Activated CD8-positive, alpha-beta T cell treated with anti-CD3 and anti-CD28 coated beads for 36 hours (primary cell): ENCODE measurements at regions of chr6 and their contacts with region 1.

Region 1: DNA sequence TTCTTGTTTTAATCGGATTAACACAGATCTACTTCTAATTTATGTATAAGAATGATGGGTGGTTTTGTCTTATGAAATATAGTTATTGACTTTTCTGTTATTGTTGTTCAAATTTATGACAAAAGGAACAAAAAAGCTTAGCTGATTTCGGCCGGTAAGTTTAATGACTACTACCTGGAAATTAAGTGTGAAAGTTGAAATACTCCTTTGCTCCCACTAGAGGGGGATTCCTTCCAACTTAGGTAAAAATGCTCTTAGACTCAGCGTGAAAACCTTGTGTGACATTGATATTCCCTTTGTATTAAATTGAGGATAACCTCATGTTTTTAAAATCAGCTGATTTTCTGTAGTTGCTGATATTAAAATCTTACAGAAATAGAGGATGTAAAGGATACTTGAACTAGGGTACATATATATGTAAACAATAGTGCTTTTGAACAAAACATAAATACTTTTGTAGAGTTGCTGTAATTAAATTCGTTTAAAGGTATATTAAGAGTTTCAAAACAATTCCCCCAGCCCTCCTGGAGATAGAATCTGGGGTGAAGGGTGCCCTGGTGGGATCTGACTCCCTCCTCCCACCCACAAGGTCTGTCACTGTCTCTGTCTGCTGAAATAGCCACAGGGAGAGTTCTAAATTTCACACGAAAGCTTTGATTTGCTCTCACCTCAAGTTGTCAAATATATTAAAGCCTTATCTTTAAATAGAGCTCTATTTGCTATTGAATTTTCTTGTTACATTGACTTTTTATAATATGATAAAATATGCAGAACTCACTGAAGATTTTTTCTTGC is 257.5 kb downstream of the ARID1B start:
- DNase-seq: no peak
- ATAC-seq: peak; percentile 82
- H3K4me3 Mint-ChIP-seq: peak overlapping the region; percentile 55
- H3K27ac Mint-ChIP-seq: peak overlapping the region; percentile 64
- H3K4me1 Mint-ChIP-seq: peaks cover 23% of the 10 kb centered on the region
- H3K27me3 Mint-ChIP-seq: no peaks in the 10 kb centered on the region
- CTCF ChIP-seq: peak; percentile 75

Region 2: GRCh38 chr6:156564127-156564806 is 470.4 kb before region 1 on chr6:
- CTCF ChIA-PET with region 1: no interaction called
- POLR2A ChIA-PET with region 1: no interaction called
- intact Hi-C with region 1: no loop called
- DNase-seq: peak; percentile 82
- ATAC-seq: peak; percentile 99
- H3K4me3 Mint-ChIP-seq: no peak overlapping the region
- H3K27ac Mint-ChIP-seq: no peak overlapping the region
- H3K4me1 Mint-ChIP-seq: no peaks in the 10 kb centered on the region
- H3K27me3 Mint-ChIP-seq: peaks cover 9% of the 10 kb centered on the region
- CTCF ChIP-seq: peak; percentile 81

Region 3: GRCh38 chr6:157045831-157046454 is 11.3 kb after region 1 on chr6:
- CTCF ChIA-PET with region 1: interaction called, 16 read pairs
- POLR2A ChIA-PET with region 1: interaction called, 3 read pairs
- intact Hi-C with region 1: no loop called
- DNase-seq: no peak
- ATAC-seq: no peak
- H3K4me3 Mint-ChIP-seq: no peak overlapping the region
- H3K27ac Mint-ChIP-seq: no peak overlapping the region
- H3K4me1 Mint-ChIP-seq: peaks cover 14% of the 10 kb centered on the region
- H3K27me3 Mint-ChIP-seq: no peaks in the 10 kb centered on the region
- CTCF ChIP-seq: peak; percentile 69

Region 4: GRCh38 chr6:157059781-157060180 is 25.1 kb after region 1 on chr6:
- CTCF ChIA-PET with region 1: interaction called, 12 read pairs
- POLR2A ChIA-PET with region 1: no interaction called
- intact Hi-C with region 1: no loop called
- DNase-seq: no peak
- ATAC-seq: no peak
- H3K4me3 Mint-ChIP-seq: no peak overlapping the region
- H3K27ac Mint-ChIP-seq: no peak overlapping the region
- H3K4me1 Mint-ChIP-seq: peaks cover 59% of the 10 kb centered on the region
- H3K27me3 Mint-ChIP-seq: no peaks in the 10 kb centered on the region
- CTCF ChIP-seq: no peak

Region 5: DNA sequence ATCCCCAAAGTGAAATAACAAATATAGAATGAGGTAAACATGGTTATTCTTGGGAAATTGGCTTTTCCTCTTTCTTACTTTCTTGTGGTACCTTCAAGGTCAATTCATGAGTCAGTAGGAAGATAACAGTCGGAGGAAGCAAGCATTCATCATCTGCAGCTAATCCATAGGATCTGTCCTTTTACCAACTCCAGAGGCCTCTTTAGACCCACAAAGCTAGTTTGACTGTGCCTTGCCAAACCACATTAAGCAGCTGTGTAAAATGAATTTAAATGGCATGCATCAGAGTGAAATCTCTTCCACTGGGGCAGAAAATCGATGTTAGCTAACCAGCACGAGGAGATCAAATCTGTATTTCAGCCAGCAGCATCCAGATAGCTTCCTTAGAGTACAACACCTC is 117.4 kb after region 1 on chr6:
- CTCF ChIA-PET with region 1: interaction called, 12 read pairs
- POLR2A ChIA-PET with region 1: no interaction called
- intact Hi-C with region 1: no loop called
- DNase-seq: no peak
- ATAC-seq: no peak
- H3K4me3 Mint-ChIP-seq: no peak overlapping the region
- H3K27ac Mint-ChIP-seq: no peak overlapping the region
- H3K4me1 Mint-ChIP-seq: peaks cover 17% of the 10 kb centered on the region
- H3K27me3 Mint-ChIP-seq: no peaks in the 10 kb centered on the region
- CTCF ChIP-seq: no peak

Region 6: DNA sequence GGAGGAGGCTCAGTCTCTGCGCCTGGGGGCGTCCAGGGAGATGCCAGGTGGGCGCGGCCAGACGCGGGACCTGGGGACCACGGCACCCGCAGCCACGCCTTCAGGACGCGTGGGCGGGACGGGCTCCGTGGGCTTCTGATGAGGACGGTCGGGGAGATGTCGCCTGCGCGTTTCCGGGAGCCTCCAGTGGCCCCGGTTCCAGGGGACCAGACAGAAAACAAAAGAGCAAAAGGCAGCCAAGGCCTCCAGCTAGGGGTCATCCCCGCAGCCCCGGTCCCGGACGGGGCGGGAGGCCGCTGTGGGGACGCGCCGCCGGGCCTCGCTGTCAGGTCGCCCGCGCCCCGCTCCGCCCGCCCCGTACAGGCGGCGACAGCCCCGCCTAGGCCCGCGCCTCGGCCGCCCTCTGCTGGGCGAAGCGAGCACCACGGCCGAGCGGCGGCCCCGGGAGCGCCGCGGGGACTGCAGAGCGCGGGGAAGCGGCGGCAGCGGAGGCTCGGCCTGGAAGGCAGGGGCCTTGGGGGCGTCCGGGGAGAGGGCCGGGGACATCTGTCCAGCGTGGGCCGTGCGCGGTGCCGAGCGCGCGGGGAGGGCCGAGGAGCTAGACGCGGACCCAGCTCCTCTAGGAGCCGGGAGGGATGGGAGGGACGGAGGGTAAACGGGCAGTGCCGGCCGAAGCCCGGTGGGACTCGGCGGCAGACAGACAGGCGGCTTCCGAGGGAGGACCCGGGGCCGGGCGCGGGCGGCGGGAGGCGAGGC is 240.0 kb after region 1 on chr6:
- CTCF ChIA-PET with region 1: interaction called, 3 read pairs
- POLR2A ChIA-PET with region 1: no interaction called
- intact Hi-C with region 1: loop called (anchors 10 kb)
- DNase-seq: peak; percentile 88
- ATAC-seq: peak; percentile 92
- H3K4me3 Mint-ChIP-seq: peak overlapping the region; percentile 80
- H3K27ac Mint-ChIP-seq: peak overlapping the region; percentile 85
- H3K4me1 Mint-ChIP-seq: peaks cover 7% of the 10 kb centered on the region
- H3K27me3 Mint-ChIP-seq: no peaks in the 10 kb centered on the region
- CTCF ChIP-seq: peak; percentile 89